Right cardiac atrium (tissue), 5 donors: ENCODE measurements at regions of chr9 and their contacts with region 1.

Region 1: DNA sequence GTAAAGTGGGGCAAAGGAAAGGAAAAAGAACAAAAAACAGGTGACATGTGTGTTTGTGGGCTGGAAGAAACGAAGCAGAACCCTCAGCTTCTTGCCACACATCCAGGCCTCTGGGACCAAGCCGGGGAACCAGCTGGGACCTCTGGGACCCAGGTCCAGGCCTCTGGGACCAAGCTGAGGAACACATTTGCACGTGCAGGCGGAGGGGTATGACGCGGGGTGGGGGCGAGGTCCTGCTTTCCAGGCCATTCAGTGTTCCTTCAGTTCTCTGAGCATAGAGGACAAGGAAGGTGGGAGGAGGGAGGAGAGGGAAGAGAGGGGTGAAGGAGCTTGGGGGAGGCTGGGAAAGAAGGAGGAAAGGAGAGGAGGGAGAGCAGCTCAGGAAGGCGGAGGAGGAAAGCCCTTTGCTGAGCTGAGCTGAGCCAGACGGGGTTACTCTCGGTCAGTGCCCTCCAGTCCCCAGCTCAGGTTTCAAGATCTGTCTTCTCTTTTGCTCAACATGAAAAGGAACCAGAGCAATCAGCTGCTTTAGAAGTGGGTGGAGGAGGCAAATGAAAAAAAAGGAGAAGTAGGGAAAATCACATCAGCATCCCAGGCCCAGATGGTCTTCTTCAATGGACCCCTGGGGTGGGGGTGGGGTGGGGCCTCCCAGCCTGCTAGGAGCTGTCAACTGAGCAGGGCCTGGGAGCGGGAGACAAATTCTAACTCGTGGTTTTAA is 59.1 kb downstream of the ABCA1 start:
- DNase-seq: peak; percentile 62 to 82 (median 78)
- ATAC-seq: peak; percentile 89 to 92
- H3K4me3 ChIP-seq: no peak overlapping the region
- H3K27ac ChIP-seq: peak overlapping the region; percentile 15
- H3K4me1 ChIP-seq: peaks cover 5% of the 10 kb centered on the region
- H3K27me3 ChIP-seq: no peaks in the 10 kb centered on the region

Region 2: DNA sequence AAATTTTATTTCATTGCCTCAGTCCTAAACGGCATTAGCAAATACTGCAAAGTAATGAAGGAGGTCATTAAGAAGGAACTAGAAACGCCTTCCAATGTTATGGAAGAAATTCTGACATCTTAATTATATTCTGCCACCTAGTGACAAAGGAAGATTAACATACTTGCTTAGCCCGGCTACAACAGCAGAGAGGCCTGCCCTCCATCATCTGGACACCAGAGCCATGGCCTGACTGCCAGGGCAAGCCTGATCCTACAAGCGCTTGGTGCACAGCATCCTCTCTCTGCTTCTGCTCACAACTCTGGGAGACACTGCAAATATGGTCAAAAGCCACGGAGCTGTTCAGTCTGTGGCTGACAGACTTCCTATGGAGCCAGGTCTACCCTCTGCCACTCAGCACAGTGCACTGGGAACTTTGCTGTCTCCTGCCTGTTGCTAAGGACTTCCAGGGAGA is 288.3 kb after region 1 on chr9:
- intact Hi-C with region 1: loop called in 3 of 4 experiments (anchors 5 kb)
- DNase-seq: peak; percentile 51 to 77 (median 70)
- ATAC-seq: peak; percentile 91 to 94
- H3K4me3 ChIP-seq: no peak overlapping the region
- H3K27ac ChIP-seq: no peak overlapping the region
- H3K4me1 ChIP-seq: no peaks in the 10 kb centered on the region
- H3K27me3 ChIP-seq: no peaks in the 10 kb centered on the region